Mammary epithelial cell (primary cell): ENCODE measurements at regions of chr13 and their contacts with region 1.

Region 1: DNA sequence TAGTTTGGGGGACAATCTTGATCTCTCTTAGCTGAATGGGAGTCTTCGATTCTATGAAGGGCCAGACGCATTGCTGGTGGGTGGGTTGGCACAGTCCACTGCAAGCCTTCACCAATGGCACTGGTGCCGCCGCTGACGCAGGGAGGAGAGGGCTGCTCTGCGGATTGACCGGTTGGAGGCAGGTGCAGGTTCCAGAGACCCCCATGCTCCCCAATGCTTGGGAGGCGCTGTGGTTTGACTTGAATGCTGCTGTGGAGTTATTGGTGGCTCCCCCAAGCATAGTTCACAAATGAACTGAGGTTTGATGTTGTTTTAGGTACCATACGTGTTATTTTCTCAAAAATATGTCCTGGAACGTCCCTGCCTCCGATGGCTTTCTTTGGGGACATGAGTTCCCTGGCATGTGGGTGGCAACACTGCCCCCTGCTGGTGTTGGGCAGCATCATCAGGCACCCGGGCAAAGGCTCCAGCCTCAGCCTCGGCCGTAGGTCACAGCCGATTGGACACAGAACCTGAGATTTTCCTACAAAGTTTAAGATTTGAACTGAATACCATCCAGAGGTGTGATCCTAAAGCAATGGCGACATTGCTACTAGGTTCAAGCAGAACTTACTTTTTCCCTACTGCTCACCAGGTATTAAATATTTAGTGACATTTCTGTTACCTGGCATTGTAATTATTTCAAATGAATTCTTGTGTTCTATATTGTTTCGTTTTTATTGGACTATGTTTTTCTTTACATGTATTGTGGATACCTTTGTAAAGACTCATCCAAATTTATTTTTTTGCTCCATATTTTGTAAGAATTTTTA is 95.5 kb downstream of the ANKRD10 start:
- DNase-seq: peak; percentile 31
- H3K4me3 ChIP-seq: no peak overlapping the region
- H3K27ac ChIP-seq: no peak overlapping the region
- H3K4me1 ChIP-seq: no peaks in the 10 kb centered on the region
- H3K27me3 ChIP-seq: no peaks in the 10 kb centered on the region
- CTCF ChIP-seq: peak; percentile 95 to 96

Region 2: DNA sequence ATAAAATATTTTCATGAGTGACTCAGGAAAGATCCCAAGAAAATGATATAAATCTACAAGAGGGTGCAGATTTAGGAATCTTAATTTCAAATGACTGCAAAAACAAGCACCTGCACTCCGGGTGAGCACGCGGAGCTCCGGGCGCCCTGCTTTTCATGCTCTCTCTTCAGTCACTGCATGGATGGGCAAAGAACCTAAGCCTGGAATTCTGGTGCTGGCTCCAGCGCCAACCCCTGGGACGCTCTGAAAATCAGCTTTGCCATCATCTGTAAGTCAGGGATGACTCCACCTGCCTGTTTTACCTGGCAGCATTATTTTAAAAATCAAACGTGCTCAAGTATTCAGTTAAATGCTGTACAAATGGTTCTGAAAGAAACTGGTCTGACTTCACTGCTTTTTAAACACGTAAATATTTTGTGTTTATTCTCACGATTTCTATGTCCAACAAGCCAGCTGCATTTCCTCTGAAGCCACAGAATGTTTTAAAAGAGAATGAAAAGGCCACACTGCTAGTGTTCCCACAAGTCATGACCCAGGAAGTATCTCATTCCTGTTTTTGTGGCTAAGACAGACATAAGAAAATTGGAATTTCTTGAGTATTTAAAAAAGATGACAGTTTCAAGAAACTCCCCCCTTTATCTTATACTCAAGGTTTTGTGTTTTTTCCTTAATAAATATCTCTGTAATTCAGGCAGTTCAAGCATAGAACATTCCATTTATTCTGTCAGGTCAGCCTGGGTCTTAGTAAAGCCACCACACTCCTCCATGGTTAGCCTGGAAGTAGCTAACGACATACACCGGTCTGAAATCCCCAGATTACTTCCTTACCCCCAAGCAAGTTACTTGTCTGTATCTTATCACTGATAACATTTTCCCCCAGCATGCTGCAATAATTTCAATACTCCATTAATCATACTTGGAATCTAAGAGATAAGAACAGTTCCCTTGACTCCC is 593.5 kb before region 1 on chr13:
- CTCF ChIA-PET with region 1: no interaction called
- dilution Hi-C with region 1: no loop called
- in situ Hi-C with region 1: no loop called
- intact Hi-C with region 1: loop called (anchors 1 kb)
- DNase-seq: no peak
- H3K4me3 ChIP-seq: no peak overlapping the region
- H3K27ac ChIP-seq: no peak overlapping the region
- H3K4me1 ChIP-seq: peaks cover 6% of the 10 kb centered on the region
- H3K27me3 ChIP-seq: no peaks in the 10 kb centered on the region
- CTCF ChIP-seq: no peak

Region 3: DNA sequence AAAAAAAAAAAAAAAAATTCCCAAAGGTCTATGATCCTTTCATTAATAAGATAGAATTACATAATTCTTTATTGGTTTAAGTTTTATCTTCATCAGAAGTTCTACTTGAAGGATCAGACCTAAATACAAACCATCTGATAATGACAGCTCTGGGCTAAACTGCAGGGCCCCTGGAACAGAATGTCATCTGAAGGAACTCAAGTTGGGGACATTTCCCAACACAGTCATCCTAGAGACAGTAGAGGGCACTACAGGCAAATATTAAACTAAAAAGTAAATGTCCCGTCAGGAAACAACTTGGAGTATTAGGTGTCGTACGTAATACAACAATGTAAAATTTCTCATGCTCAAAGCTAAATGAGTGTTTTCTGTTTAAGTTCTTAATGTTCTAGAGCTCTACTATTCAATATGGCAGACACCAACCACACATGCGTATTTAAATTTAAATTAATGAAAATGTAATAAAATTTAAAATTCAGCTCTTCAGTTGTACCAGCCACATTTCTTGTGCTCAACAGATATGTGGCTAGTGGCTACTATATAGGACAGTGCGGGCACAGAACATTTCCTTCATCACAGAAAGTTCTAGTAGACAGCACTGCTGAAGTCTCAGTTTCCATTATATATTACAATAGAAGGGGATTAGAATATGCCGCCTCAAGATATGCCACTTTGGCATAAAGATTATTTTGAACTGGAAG is 225.8 kb before region 1 on chr13:
- CTCF ChIA-PET with region 1: no interaction called
- dilution Hi-C with region 1: no loop called
- in situ Hi-C with region 1: loop called in 1 of 2 experiments (anchors 10 kb)
- intact Hi-C with region 1: loop called (anchors 1 kb)
- DNase-seq: peak; percentile 39
- H3K4me3 ChIP-seq: no peak overlapping the region
- H3K27ac ChIP-seq: no peak overlapping the region
- H3K4me1 ChIP-seq: peaks cover 16% of the 10 kb centered on the region
- H3K27me3 ChIP-seq: no peaks in the 10 kb centered on the region
- CTCF ChIP-seq: peak; percentile 51 to 61

Region 4: GRCh38 chr13:110615322-110616102 is 203.9 kb before region 1 on chr13 and contains the start of gene NAXD:
- CTCF ChIA-PET with region 1: no interaction called
- dilution Hi-C with region 1: no loop called
- in situ Hi-C with region 1: no loop called
- intact Hi-C with region 1: loop called (anchors 1 kb)
- DNase-seq: peak; percentile 93
- H3K4me3 ChIP-seq: peak within 1 kb of the TSS; percentile 62 to 83 (median 70)
- H3K27ac ChIP-seq: peak within 1 kb of the TSS; percentile 52
- H3K4me1 ChIP-seq: peaks cover 28% of the 10 kb centered on the region
- H3K27me3 ChIP-seq: no peaks in the 10 kb centered on the region
- CTCF ChIP-seq: no peak
- total RNA-seq, gene NAXD: 18.3 to 27.0 TPM

Region 5: GRCh38 chr13:110636701-110637201 is 182.7 kb before region 1 on chr13:
- CTCF ChIA-PET with region 1: no interaction called
- dilution Hi-C with region 1: no loop called
- in situ Hi-C with region 1: no loop called
- intact Hi-C with region 1: no loop called
- DNase-seq: no peak
- H3K4me3 ChIP-seq: no peak overlapping the region
- H3K27ac ChIP-seq: no peak overlapping the region
- H3K4me1 ChIP-seq: no peaks in the 10 kb centered on the region
- H3K27me3 ChIP-seq: no peaks in the 10 kb centered on the region
- CTCF ChIP-seq: no peak

Region 6: GRCh38 chr13:110683203-110683883 is 136.1 kb before region 1 on chr13:
- CTCF ChIA-PET with region 1: no interaction called
- dilution Hi-C with region 1: no loop called
- in situ Hi-C with region 1: no loop called
- intact Hi-C with region 1: loop called (anchors 2 kb)
- DNase-seq: peak; percentile 20
- H3K4me3 ChIP-seq: no peak overlapping the region
- H3K27ac ChIP-seq: no peak overlapping the region
- H3K4me1 ChIP-seq: no peaks in the 10 kb centered on the region
- H3K27me3 ChIP-seq: no peaks in the 10 kb centered on the region
- CTCF ChIP-seq: peak in 1 of 2 donors; percentile 37

Region 7: GRCh38 chr13:110715395-110716235 is 103.8 kb before region 1 on chr13:
- CTCF ChIA-PET with region 1: no interaction called
- dilution Hi-C with region 1: no loop called
- in situ Hi-C with region 1: no loop called
- intact Hi-C with region 1: loop called (anchors 2 kb)
- DNase-seq: peak; percentile 100
- H3K4me3 ChIP-seq: peak overlapping the region; percentile 72 to 87 (median 73)
- H3K27ac ChIP-seq: peak overlapping the region; percentile 75
- H3K4me1 ChIP-seq: peaks cover 15% of the 10 kb centered on the region
- H3K27me3 ChIP-seq: no peaks in the 10 kb centered on the region
- CTCF ChIP-seq: peak in 1 of 2 donors; percentile 18

Region 8: GRCh38 chr13:110907951-110908898 is 88.8 kb after region 1 on chr13:
- CTCF ChIA-PET with region 1: no interaction called
- dilution Hi-C with region 1: no loop called
- in situ Hi-C with region 1: no loop called
- intact Hi-C with region 1: loop called (anchors 5 kb)
- DNase-seq: peak; percentile 99
- H3K4me3 ChIP-seq: peak overlapping the region in 1 of 3 experiments; percentile 12
- H3K27ac ChIP-seq: peak overlapping the region; percentile 100
- H3K4me1 ChIP-seq: peaks cover 67% of the 10 kb centered on the region
- H3K27me3 ChIP-seq: no peaks in the 10 kb centered on the region
- CTCF ChIP-seq: peak in 1 of 2 donors; percentile 36